ENCODE measurements at regions of chr22 and their contacts with region 1.

Region 1: GRCh38 chr22:27885977-27886842 is 32.8 kb downstream of the PITPNB start:
- DNase-seq: no peak
- ATAC-seq: peak; percentile 77
- H3K4me3 ChIP-seq: no peak overlapping the region
- H3K27ac ChIP-seq: no peak overlapping the region
- H3K4me1 ChIP-seq: peaks cover 0 to 4% of the 10 kb centered on the region in 2 donors
- H3K27me3 ChIP-seq: no peaks in the 10 kb centered on the region

Region 2: DNA sequence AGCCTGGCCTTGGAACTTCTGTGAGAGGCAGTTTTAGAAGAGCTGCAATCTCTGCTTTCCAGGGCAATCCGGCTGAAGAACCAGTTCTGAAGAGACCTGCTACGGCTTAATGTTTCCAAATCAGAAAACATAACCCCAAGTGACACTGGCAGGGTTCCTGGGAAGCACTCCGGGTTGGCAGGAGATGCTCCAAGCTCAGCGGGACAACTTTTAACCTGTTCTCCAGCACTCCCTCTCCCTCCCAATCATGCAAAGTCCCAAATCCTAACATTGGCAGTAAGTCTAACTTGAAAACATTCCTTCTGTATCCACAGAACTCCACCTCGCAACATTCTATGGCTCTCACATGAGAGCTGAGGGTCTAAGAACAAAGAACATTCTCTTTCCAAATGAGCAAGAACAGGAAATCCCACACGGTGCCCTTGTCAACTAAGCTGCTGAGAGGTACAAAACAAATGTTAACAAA is 36.2 kb before region 1 on chr22:
- intact Hi-C with region 1: no loop called
- DNase-seq: no peak
- ATAC-seq: no peak
- H3K4me3 ChIP-seq: no peak overlapping the region
- H3K27ac ChIP-seq: peak overlapping the region in 1 of 2 donors; percentile 60
- H3K4me1 ChIP-seq: no peaks in the 10 kb centered on the region
- H3K27me3 ChIP-seq: no peaks in the 10 kb centered on the region

Region 3: GRCh38 chr22:27919222-27919941 is 33.2 kb after region 1 on chr22 and contains the start of gene PITPNB:
- intact Hi-C with region 1: loop called (anchors 2 to 5 kb)
- DNase-seq: peak; percentile 99 to 100
- ATAC-seq: peak; percentile 99
- H3K4me3 ChIP-seq: peak within 1 kb of the TSS; percentile 32 to 74
- H3K27ac ChIP-seq: peak within 1 kb of the TSS; percentile 86 to 100
- H3K4me1 ChIP-seq: peaks cover 2 to 5% of the 10 kb centered on the region in 2 donors
- H3K27me3 ChIP-seq: no peaks in the 10 kb centered on the region
- total RNA-seq, gene PITPNB: 130 to 162 TPM

Region 4: GRCh38 chr22:28015676-28016601 is 129.7 kb after region 1 on chr22:
- intact Hi-C with region 1: no loop called
- DNase-seq: peak in 1 of 2 donors; percentile 69
- ATAC-seq: no peak
- H3K4me3 ChIP-seq: no peak overlapping the region
- H3K27ac ChIP-seq: no peak overlapping the region
- H3K4me1 ChIP-seq: no peaks in the 10 kb centered on the region
- H3K27me3 ChIP-seq: no peaks in the 10 kb centered on the region